A549 (cell line): ENCODE measurements at regions of chr16 and their contacts with region 1.

Region 1: DNA sequence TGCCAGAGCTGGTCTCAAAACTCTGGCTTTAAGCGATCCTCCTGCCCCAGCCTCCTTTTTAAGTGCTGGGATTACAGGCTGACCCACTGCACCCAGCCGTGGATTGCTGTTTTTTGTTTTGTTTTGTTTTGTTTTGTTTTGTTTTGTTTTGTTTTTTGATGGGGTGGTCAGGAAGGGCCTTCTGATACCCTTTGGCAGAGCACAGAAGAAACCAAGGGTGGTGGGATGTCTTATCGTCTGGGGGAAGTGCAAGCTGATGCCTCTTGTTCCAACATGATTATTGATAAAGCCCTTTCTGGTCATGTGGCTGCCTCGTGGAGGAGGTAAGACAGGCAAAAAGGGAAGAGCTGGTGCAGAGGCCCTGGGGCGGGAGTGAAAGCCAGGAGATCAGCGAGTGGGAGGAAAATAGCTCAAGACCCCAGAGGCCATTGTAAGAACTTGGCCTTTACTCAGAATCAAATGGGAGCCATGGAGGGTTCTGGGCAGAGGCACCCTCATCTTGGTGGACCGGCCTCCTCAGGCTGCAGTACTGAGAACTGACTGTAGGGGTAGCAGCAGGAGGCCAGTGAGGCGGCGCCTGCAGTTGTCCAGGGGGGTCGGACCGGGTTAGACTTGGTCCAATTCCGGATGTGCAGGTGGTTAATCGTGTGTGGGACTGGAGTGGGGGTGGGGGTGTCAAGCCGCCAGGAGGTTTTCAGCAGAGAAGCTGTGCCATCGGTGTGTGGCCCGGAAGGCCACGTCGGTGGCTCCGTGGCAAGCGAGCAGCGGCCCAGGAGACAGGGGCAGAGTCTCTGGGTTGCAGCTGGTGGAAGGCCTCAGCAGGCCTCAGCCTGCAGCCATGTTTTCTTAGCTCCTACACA is 84.4 kb upstream of the GSE1 start:
- DNase-seq: peak; percentile 26 to 60
- ATAC-seq: peak in 1 of 2 experiments; percentile 60; a peak in 3 of 6 replicates
- H3K4me3 ChIP-seq: no peak overlapping the region
- H3K27ac ChIP-seq: 0 out of 6 replicates have a peak overlapping the region, but pooled peaks of 1 of the 2 experiments have one; percentile 15
- H3K4me1 ChIP-seq: peaks cover 21% of the 10 kb centered on the region
- CTCF ChIP-seq: peak; percentile 36; the same call in 2 of the 3 replicates
- EP300 ChIP-seq: no peak
- POLR2A ChIP-seq: no peak
- RAD21 ChIP-seq: no peak

Region 2: GRCh38 chr16:85514595-85515318 is 14.0 kb before region 1 on chr16:
- CTCF ChIA-PET with region 1: interaction called, 21 read pairs
- POLR2A ChIA-PET with region 1: interaction called, 8 read pairs
- DNase-seq: peak; percentile 92 to 95
- ATAC-seq: peak; percentile 85 to 89
- H3K4me3 ChIP-seq: peak overlapping the region; percentile 24; the same call in 2 of the 3 replicates
- H3K27ac ChIP-seq: peak overlapping the region; percentile 95 to 97
- H3K4me1 ChIP-seq: peaks cover 36% of the 10 kb centered on the region
- CTCF ChIP-seq: no peak
- EP300 ChIP-seq: peak; percentile 28 to 78; a peak in 2 of 5 replicates
- POLR2A ChIP-seq: 0 out of 2 replicates have a peak, but pooled peaks have one; percentile 14
- RAD21 ChIP-seq: peak in 1 of 2 experiments; percentile 45; a peak in 2 of 5 replicates

Region 3: GRCh38 chr16:85541980-85542900 is 13.5 kb after region 1 on chr16:
- CTCF ChIA-PET with region 1: interaction called, 34 read pairs
- POLR2A ChIA-PET with region 1: no interaction called
- DNase-seq: no peak
- ATAC-seq: peak in 1 of 2 experiments; percentile 18; a peak in 2 of 6 replicates
- H3K4me3 ChIP-seq: no peak overlapping the region
- H3K27ac ChIP-seq: no peak overlapping the region
- H3K4me1 ChIP-seq: no peaks in the 10 kb centered on the region
- CTCF ChIP-seq: no peak
- EP300 ChIP-seq: no peak
- POLR2A ChIP-seq: no peak
- RAD21 ChIP-seq: no peak

Region 4: GRCh38 chr16:85592700-85593493 is 64.1 kb after region 1 on chr16:
- CTCF ChIA-PET with region 1: no interaction called
- POLR2A ChIA-PET with region 1: no interaction called
- DNase-seq: no peak
- ATAC-seq: peak in 1 of 2 experiments; percentile 35; a peak in 2 of 6 replicates
- H3K4me3 ChIP-seq: no peak overlapping the region
- H3K27ac ChIP-seq: no peak overlapping the region
- H3K4me1 ChIP-seq: no peaks in the 10 kb centered on the region
- CTCF ChIP-seq: no peak
- EP300 ChIP-seq: no peak
- POLR2A ChIP-seq: no peak
- RAD21 ChIP-seq: no peak

Region 5: DNA sequence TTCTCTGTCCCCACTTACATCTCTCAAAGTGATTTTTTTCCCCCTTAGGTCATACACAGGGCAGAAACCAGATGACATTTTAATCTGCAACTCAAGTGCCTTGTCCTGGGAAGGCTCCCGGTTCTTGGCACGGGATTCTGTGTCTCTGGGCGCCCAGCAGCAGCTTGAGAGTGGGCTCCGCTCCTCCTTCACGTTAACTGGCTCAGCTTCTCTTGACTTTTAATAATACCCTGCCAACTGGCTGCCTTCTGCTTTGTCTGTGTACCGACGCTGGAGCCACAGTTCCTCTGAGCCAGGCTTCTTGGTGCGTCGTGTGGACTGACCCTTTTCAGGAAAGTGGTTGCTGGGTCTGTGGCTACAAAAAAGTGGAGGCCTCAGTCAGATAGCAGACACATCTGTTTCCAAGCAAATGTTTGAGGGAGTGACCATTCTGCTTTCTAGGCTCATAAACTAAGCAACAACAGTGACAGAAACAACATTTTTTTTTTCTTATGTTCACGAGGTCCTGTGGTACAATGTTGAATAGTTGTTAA is 435.1 kb after region 1 on chr16:
- CTCF ChIA-PET with region 1: no interaction called
- POLR2A ChIA-PET with region 1: no interaction called
- DNase-seq: no peak
- ATAC-seq: no peak
- H3K4me3 ChIP-seq: no peak overlapping the region
- H3K27ac ChIP-seq: no peak overlapping the region
- H3K4me1 ChIP-seq: no peaks in the 10 kb centered on the region
- CTCF ChIP-seq: no peak
- EP300 ChIP-seq: no peak
- POLR2A ChIP-seq: no peak
- RAD21 ChIP-seq: no peak